ENCODE measurements at regions of chr22 and their contacts with region 1.

Region 1: GRCh38 chr22:22753526-22754267 is 109.3 kb downstream of the GGTLC2 start:
- DNase-seq: peak; percentile 83
- H3K4me3 Mint-ChIP-seq: no peak overlapping the region
- H3K27ac Mint-ChIP-seq: no peak overlapping the region
- H3K4me1 Mint-ChIP-seq: peaks cover 6% of the 10 kb centered on the region
- H3K27me3 Mint-ChIP-seq: no peaks in the 10 kb centered on the region

Region 2: GRCh38 chr22:22487869-22488597 is 265.7 kb before region 1 on chr22:
- CTCF ChIA-PET with region 1: no interaction called
- POLR2A ChIA-PET with region 1: no interaction called
- DNase-seq: no peak
- H3K4me3 Mint-ChIP-seq: no peak overlapping the region
- H3K27ac Mint-ChIP-seq: no peak overlapping the region
- H3K4me1 Mint-ChIP-seq: no peaks in the 10 kb centered on the region
- H3K27me3 Mint-ChIP-seq: no peaks in the 10 kb centered on the region

Region 3: DNA sequence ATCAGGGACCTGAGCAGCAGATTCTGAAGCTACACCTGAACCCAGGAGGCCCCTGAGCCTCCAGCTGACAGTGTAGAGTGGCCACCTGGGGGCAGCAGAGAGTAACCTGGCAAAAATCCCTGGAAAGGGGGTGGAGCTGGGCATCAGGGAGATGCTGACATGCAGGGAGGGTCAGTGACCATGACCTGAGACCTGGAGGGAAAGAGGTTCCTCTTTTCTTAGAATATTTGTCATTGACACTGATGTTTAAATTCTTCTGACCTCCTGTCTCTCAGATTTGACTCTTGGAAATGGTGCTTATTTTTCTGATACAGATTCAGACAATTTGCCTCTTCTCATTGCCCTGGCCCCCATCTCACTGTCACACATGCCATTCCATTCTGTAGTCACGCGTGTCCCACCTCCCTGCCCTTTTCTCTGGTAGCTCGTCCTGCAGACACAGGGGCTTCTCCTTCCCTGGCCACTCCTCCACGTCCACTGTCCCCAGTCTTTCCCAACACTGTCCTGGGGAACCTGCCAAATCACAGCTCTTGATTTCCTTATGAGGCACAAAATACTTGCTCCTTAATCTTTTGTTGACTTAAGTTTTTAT is 16.7 kb after region 1 on chr22:
- CTCF ChIA-PET with region 1: interaction called, 36 read pairs
- POLR2A ChIA-PET with region 1: no interaction called
- DNase-seq: peak; percentile 50
- H3K4me3 Mint-ChIP-seq: no peak overlapping the region
- H3K27ac Mint-ChIP-seq: no peak overlapping the region
- H3K4me1 Mint-ChIP-seq: no peaks in the 10 kb centered on the region
- H3K27me3 Mint-ChIP-seq: peaks cover 9% of the 10 kb centered on the region